Heart left ventricle (tissue), 16 donors: ENCODE measurements at regions of chrX and their contacts with region 1.

Region 1: GRCh38 chrX:107894038-107894437 is 68.4 kb downstream of the MID2 start:
- DNase-seq: peak in 1 of 5 donors; percentile 5
- ATAC-seq: peak in 3 of 4 donors; percentile 48 to 59 (median 51)
- H3K4me3 ChIP-seq: no peak overlapping the region
- H3K27ac ChIP-seq: no peak overlapping the region
- H3K4me1 ChIP-seq: no peaks in the 10 kb centered on the region
- H3K27me3 ChIP-seq: peaks cover 0 to 24% (median 0%) of the 10 kb centered on the region in 9 donors
- CTCF ChIP-seq: peak; percentile 40 to 75 (median 61)
- POLR2A ChIP-seq: no peak

Region 2: GRCh38 chrX:106481341-106481740 is 1412.7 kb before region 1 on chrX:
- intact Hi-C with region 1: loop called in 1 of 10 experiments (anchors 10 kb)
- DNase-seq: peak in 3 of 5 donors; percentile 15 to 21 (median 19)
- ATAC-seq: peak in 3 of 4 donors; percentile 26 to 71 (median 33)
- H3K4me3 ChIP-seq: no peak overlapping the region
- H3K27ac ChIP-seq: no peak overlapping the region
- H3K4me1 ChIP-seq: no peaks in the 10 kb centered on the region
- H3K27me3 ChIP-seq: peaks cover 0 to 4% (median 0%) of the 10 kb centered on the region in 9 donors
- CTCF ChIP-seq: peak; percentile 44 to 81 (median 65)
- POLR2A ChIP-seq: no peak

Region 3: DNA sequence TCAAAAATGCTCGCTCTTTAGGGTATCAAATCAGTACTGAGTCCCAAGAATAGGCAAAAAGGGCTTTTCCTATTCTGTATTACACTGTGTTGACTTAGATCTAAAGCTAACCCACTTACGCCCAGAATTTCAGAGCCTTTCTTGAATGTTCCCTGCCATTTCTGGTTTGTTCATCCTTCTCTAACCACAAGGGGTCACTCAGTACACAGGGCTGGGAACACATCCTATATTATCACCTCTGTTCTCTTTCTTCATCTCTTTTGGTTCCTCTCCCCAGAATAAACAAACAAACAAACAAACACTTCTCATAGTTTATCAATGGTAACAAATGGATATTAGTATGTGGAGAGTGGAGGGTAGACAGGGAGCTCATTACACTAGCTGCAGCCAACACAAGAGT is 868.5 kb before region 1 on chrX:
- intact Hi-C with region 1: loop called in 3 of 10 experiments (anchors 5 kb)
- DNase-seq: no peak
- ATAC-seq: peak in 1 of 4 donors; percentile 50
- H3K4me3 ChIP-seq: no peak overlapping the region
- H3K27ac ChIP-seq: no peak overlapping the region
- H3K4me1 ChIP-seq: no peaks in the 10 kb centered on the region
- H3K27me3 ChIP-seq: peaks cover 0 to 21% (median 0%) of the 10 kb centered on the region in 9 donors
- CTCF ChIP-seq: peak in 11 of 12 donors; percentile 27 to 53 (median 35)
- POLR2A ChIP-seq: no peak

Region 4: DNA sequence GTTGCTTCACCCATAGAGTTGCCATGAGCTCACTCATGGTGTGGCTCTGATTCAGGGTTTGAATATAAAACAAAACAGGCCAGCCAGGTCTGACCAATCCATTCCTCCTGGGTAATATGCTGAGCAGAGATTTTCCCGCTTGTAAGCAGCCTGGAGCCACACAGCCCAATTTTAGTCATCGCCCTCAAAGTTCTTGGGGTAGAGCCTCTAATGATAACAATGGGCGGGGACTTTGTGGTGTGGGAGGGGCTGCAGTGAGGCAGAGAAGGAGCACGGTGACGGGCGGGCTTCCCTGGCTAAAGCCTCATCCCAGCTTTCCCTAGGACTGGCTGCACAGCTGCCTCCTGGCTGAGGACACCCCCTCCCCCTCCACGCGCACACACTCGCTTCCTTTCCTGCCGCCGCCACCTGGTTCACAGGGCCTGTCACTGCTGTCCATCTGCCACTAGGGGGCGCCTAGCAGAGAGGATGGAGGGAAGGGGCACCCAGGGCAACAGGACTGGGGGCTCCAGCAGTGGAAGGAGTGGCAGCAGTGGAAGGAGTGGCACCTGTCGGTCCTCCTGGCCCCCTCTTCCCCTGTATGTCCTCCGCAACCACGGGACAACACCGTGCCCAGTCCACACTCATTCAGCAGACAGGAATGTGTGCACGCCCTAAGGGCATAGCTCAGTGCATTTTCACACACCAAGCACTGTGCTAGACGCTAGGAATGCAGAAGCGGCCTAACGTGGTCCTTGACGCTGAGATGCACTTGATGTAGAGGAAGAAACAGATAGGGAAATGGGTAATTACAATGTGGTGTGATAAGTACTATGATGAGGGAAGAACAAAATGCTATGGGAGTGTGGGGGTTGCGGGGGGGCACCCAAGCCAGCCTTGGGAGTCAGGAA is 238.9 kb before region 1 on chrX:
- intact Hi-C with region 1: loop called (anchors 2 to 5 kb)
- DNase-seq: peak; percentile 40 to 75 (median 56)
- ATAC-seq: peak; percentile 47 to 88 (median 79)
- H3K4me3 ChIP-seq: peak overlapping the region in 1 of 12 donors; percentile 25
- H3K27ac ChIP-seq: peak overlapping the region in 3 of 12 donors; percentile 11 to 43 (median 16)
- H3K4me1 ChIP-seq: peaks cover 0 to 10% (median 7%) of the 10 kb centered on the region in 12 donors
- H3K27me3 ChIP-seq: peaks cover 0 to 8% (median 0%) of the 10 kb centered on the region in 9 donors
- CTCF ChIP-seq: peak; percentile 51 to 79 (median 64)
- POLR2A ChIP-seq: no peak

Region 5: GRCh38 chrX:107716816-107717700 is 177.0 kb before region 1 on chrX:
- intact Hi-C with region 1: loop called in 1 of 10 experiments (anchors 5 kb)
- DNase-seq: peak; percentile 87 to 90 (median 88)
- ATAC-seq: peak; percentile 74 to 88 (median 82)
- H3K4me3 ChIP-seq: peak overlapping the region; percentile 46 to 95 (median 75)
- H3K27ac ChIP-seq: peak overlapping the region; percentile 89 to 99 (median 93)
- H3K4me1 ChIP-seq: peaks cover 0 to 60% (median 10%) of the 10 kb centered on the region in 12 donors
- H3K27me3 ChIP-seq: peaks cover 0 to 13% (median 0%) of the 10 kb centered on the region in 9 donors
- CTCF ChIP-seq: no peak
- POLR2A ChIP-seq: peak; percentile 17 to 97

Region 6: DNA sequence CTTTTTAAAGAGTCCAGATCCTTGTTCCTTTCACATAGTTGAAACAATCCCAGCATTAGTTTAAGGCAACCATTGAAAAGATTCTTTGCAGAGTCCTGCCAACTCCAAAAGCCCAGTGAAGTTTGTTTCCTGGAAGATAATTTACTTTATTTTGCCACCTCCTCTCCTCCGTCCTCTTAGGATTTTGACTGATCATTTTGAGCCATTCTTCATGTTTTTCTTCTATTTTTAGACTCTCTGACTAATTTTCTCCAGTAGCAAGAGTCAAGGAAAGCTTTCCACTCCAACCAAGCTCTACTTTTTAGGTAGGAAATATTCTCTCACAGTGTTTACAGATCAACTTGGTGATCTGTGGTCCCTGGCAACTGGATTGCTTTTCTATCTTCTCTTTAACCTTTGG is 106.2 kb before region 1 on chrX:
- intact Hi-C with region 1: loop called in 1 of 10 experiments (anchors 5 kb)
- DNase-seq: no peak
- ATAC-seq: peak in 1 of 4 donors; percentile 9
- H3K4me3 ChIP-seq: no peak overlapping the region
- H3K27ac ChIP-seq: no peak overlapping the region
- H3K4me1 ChIP-seq: no peaks in the 10 kb centered on the region
- H3K27me3 ChIP-seq: peaks cover 0 to 20% (median 0%) of the 10 kb centered on the region in 9 donors
- CTCF ChIP-seq: no peak
- POLR2A ChIP-seq: no peak

Region 7: DNA sequence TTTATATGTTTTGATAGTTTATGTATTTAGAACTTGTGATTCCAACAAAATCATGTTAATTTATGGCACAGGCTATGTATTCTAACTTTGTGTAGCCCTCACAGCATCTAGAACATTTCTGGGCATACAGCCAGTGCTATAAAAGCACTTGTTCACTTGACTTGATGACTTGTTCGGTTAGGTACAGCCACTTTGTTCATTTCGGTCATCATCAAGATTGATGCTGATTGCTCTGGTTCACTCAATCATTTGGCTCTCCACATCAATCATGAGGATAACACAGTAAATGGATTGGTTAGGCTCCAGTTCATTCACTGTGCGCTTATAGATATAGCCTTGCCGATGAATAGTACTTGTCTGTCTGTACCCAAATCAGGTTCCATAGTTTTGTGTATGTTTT is 940.0 kb after region 1 on chrX:
- intact Hi-C with region 1: no loop called
- DNase-seq: no peak
- ATAC-seq: no peak
- H3K4me3 ChIP-seq: no peak overlapping the region
- H3K27ac ChIP-seq: no peak overlapping the region
- H3K4me1 ChIP-seq: no peaks in the 10 kb centered on the region
- H3K27me3 ChIP-seq: peaks cover 0 to 3% (median 0%) of the 10 kb centered on the region in 9 donors
- CTCF ChIP-seq: no peak
- POLR2A ChIP-seq: no peak